AG04450 (cell line): ENCODE measurements at regions of chr6 and their contacts with region 1.

Region 1: DNA sequence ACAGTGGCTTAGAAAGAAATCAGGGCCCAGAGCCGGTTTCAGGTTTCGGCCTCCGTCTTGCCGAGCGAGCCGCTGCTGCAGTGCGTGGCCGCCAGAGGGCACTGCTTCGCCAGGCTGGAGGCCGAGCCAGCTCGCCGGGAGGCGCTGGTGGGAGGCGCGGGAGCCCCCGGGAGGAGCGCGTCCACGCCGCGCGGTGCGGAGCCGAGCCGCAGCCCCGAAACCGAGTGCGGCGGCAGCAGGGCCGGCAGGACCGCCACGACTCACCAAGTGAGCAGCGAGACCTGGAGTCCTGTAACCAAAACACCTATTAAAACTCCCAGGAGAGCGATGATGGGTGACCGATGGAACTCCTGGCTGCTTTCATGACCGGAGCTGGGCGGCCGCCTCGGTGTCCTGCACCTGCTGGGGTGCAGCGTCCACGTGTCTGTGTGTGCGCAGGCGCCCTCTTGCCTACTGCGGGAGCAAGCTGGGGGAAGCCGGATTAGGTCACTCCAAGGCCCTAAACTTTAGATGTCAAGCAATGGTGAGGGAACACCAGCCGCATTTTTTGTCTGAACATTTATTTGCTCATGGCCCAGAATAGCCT is 186.9 kb upstream of the UST start:
- DNase-seq: peak; percentile 50
- H3K4me3 ChIP-seq: peak overlapping the region; percentile 58
- H3K27ac ChIP-seq: no peak overlapping the region
- H3K27me3 ChIP-seq: no peaks in the 10 kb centered on the region
- CTCF ChIP-seq: peak; percentile 92

Region 2: GRCh38 chr6:148349466-148349865 is 210.5 kb before region 1 on chr6:
- CTCF ChIA-PET with region 1: no interaction called
- POLR2A ChIA-PET with region 1: no interaction called
- DNase-seq: no peak
- H3K4me3 ChIP-seq: no peak overlapping the region
- H3K27ac ChIP-seq: no peak overlapping the region
- H3K27me3 ChIP-seq: no peaks in the 10 kb centered on the region
- CTCF ChIP-seq: no peak

Region 3: DNA sequence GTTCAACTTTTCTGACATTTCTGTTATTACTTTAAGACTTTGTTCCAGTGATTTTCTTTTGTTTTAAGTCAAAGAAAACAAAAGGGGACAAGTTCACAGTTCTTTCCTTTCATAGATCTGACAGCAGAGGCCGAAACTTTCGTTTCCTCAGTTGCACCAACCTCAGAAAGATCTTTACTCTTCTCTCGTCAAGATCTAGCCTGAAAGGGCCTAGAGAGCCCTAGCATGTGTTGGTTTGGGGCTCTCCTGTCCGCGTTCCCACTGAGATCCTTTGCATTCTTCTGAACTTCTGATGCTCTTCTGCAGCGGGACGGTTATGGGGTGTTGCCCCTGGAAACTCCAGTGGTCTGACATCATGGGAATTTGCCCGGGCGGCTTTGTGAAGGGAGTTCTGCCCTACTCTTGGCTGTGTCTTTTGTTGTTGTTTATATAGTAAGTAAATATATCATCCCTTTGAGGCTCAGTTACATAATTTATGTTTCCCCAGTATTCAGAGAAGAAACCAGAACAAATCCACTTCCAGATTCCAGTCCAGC is 88.2 kb before region 1 on chr6:
- CTCF ChIA-PET with region 1: no interaction called
- POLR2A ChIA-PET with region 1: no interaction called
- DNase-seq: no peak
- H3K4me3 ChIP-seq: no peak overlapping the region
- H3K27ac ChIP-seq: no peak overlapping the region
- H3K27me3 ChIP-seq: no peaks in the 10 kb centered on the region
- CTCF ChIP-seq: no peak

Region 4: DNA sequence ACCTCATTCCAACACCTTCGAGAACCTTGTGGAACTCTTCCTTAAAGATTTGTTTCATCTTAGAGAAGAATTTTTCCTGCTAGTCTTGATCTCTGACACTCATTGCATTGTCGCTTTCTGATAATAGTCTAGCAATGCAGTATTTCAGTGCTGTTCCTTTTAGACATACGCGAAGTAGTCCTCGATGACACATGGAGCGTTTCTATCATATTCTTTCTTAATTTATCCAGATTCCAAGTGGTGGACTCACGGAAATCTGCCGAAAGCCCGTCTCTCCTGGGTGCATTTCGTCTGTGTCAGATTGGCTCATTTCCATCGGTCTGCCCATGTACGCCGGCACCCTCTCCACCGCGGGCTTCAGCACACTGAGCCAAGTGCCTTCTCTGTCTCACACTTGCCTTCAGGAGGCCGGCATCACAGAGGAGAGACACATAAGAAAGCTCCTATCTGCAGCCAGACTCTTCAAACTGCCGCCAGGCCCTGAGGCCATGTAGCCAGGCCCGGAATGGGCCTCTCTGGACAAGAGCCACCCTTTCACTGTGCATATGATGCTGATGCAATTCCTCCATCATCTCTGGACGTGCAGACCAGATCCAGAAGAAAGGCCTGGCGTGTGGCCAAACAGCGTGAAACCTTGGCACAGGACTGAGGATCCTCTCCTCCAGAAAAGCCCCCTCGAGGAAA is 11.7 kb before region 1 on chr6:
- CTCF ChIA-PET with region 1: interaction called, 15 read pairs
- POLR2A ChIA-PET with region 1: no interaction called
- DNase-seq: no peak
- H3K4me3 ChIP-seq: no peak overlapping the region
- H3K27ac ChIP-seq: no peak overlapping the region
- H3K27me3 ChIP-seq: no peaks in the 10 kb centered on the region
- CTCF ChIP-seq: no peak

Region 5: DNA sequence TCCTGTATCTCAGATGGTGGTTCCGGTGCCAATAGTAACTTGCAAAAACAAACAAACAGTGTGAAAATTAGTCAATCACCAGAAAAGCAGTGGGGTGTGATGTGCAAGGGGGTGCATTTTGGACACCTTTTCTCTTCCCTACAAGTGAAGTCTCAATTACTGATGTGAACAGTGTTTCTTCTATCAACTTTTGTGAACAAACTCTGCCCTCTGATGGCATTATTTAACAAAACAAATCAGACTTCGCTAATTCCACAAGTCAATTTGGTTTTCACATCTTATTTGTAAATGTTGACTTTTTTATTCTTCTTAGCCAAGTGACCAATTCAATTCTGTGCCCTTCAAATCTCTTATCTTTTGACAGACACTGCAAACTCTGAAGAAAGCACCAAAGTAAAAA is 399.1 kb after region 1 on chr6:
- CTCF ChIA-PET with region 1: interaction called, 10 read pairs
- POLR2A ChIA-PET with region 1: no interaction called
- DNase-seq: no peak
- H3K4me3 ChIP-seq: no peak overlapping the region
- H3K27ac ChIP-seq: no peak overlapping the region
- H3K27me3 ChIP-seq: no peaks in the 10 kb centered on the region
- CTCF ChIP-seq: no peak

Region 6: DNA sequence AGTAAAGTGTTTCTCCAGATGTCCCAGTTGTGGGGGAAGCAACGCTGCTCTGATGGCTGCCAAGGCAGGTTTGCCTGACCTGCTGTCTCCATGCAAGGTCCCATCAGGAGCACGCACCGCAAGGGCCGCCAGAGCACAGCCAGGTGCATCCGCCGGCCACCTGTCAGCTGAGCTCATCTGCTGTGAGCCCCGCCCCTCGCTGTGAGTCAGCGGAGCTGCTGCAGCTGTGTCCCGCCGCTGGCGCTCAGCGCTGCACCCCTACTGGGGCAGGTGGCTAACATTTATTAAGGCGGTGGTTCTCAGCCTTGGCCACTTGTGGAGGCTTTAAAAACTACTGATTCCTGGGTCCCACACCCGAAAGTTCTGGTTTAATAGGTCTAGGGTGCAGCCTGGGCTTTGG is 412.5 kb after region 1 on chr6:
- CTCF ChIA-PET with region 1: interaction called, 14 read pairs
- POLR2A ChIA-PET with region 1: no interaction called
- DNase-seq: no peak
- H3K4me3 ChIP-seq: no peak overlapping the region
- H3K27ac ChIP-seq: no peak overlapping the region
- H3K27me3 ChIP-seq: no peaks in the 10 kb centered on the region
- CTCF ChIP-seq: no peak